Activated naive CD4-positive, alpha-beta T cell treated with anti-CD3 and anti-CD28 coated beads for 36 hours (primary cell): ENCODE measurements at regions of chr17 and their contacts with region 1.

Region 1: GRCh38 chr17:17752089-17752820 is 71.0 kb downstream of the RAI1 start:
- DNase-seq: peak; percentile 97
- H3K4me3 Mint-ChIP-seq: peak overlapping the region; percentile 92
- H3K27ac Mint-ChIP-seq: peak overlapping the region; percentile 98
- H3K4me1 Mint-ChIP-seq: peaks cover 71% of the 10 kb centered on the region
- H3K27me3 Mint-ChIP-seq: no peaks in the 10 kb centered on the region

Region 2: GRCh38 chr17:17694169-17695081 is 57.8 kb before region 1 on chr17:
- CTCF ChIA-PET with region 1: interaction called, 4 read pairs
- intact Hi-C with region 1: loop called (anchors 1 kb)
- DNase-seq: peak; percentile 80
- H3K4me3 Mint-ChIP-seq: peak overlapping the region; percentile 90
- H3K27ac Mint-ChIP-seq: peak overlapping the region; percentile 97
- H3K4me1 Mint-ChIP-seq: peaks cover 71% of the 10 kb centered on the region
- H3K27me3 Mint-ChIP-seq: no peaks in the 10 kb centered on the region

Region 3: GRCh38 chr17:17783116-17783824 is 31.0 kb after region 1 on chr17:
- CTCF ChIA-PET with region 1: no interaction called
- intact Hi-C with region 1: loop called (anchors 1 kb)
- DNase-seq: peak; percentile 71
- H3K4me3 Mint-ChIP-seq: peak overlapping the region; percentile 70
- H3K27ac Mint-ChIP-seq: no peak overlapping the region
- H3K4me1 Mint-ChIP-seq: peaks cover 21% of the 10 kb centered on the region
- H3K27me3 Mint-ChIP-seq: peaks cover 2% of the 10 kb centered on the region

Region 4: GRCh38 chr17:17823433-17824118 is 71.3 kb after region 1 on chr17:
- CTCF ChIA-PET with region 1: no interaction called
- intact Hi-C with region 1: loop called (anchors 1 kb)
- DNase-seq: peak; percentile 82
- H3K4me3 Mint-ChIP-seq: peak overlapping the region; percentile 75
- H3K27ac Mint-ChIP-seq: peak overlapping the region; percentile 91
- H3K4me1 Mint-ChIP-seq: peaks cover 94% of the 10 kb centered on the region
- H3K27me3 Mint-ChIP-seq: no peaks in the 10 kb centered on the region

Region 5: GRCh38 chr17:17849845-17850373 is 97.7 kb after region 1 on chr17:
- CTCF ChIA-PET with region 1: no interaction called
- intact Hi-C with region 1: loop called (anchors 1 kb)
- DNase-seq: peak; percentile 94
- H3K4me3 Mint-ChIP-seq: peak overlapping the region; percentile 41
- H3K27ac Mint-ChIP-seq: peak overlapping the region; percentile 95
- H3K4me1 Mint-ChIP-seq: peaks cover 78% of the 10 kb centered on the region
- H3K27me3 Mint-ChIP-seq: no peaks in the 10 kb centered on the region

Region 6: DNA sequence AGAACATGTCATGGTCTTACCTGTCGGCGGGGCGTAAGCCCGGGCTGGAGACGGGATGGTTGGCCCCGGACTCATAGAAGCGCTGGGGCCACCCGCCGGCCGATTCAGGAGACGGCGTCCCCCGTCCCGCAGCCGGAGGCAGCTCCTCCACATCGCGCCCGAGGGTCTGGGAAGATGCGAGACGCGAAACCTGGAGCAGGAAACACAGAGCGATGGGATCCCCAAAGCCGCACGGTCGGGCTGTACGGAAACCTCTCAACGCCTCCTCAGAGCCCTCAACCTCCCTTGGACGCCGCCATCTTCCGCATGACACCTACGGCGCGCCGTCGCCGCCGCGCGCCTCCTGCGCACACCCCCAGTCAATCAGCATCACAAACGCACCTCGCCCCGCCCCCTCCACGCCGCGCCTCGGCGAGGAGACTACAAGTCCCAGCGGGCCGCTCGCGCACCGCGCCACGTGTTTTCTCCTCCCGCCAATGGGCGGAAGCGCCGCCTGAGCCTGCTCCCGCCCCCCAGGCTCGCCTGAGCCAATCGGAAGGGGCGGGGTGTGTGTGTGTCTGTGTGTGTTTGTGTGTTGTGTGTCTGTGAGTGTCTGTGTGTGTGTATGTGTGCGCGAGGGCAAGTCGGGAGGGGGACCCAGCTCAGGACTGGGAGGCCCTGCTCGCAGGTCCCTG is 286.7 kb after region 1 on chr17 and contains the starts of genes ATPAF2 and GID4:
- CTCF ChIA-PET with region 1: no interaction called
- intact Hi-C with region 1: loop called (anchors 1 kb)
- DNase-seq: peak; percentile 100
- H3K4me3 Mint-ChIP-seq: peak within 1 kb of the TSS; percentile 86
- H3K27ac Mint-ChIP-seq: peak within 1 kb of the TSS; percentile 79
- H3K4me1 Mint-ChIP-seq: peaks cover 40% of the 10 kb centered on the region
- H3K27me3 Mint-ChIP-seq: no peaks in the 10 kb centered on the region
- total RNA-seq, gene ATPAF2: 24.7 to 25.7 TPM
- total RNA-seq, gene GID4: 5.2 to 6.0 TPM

Region 7: DNA sequence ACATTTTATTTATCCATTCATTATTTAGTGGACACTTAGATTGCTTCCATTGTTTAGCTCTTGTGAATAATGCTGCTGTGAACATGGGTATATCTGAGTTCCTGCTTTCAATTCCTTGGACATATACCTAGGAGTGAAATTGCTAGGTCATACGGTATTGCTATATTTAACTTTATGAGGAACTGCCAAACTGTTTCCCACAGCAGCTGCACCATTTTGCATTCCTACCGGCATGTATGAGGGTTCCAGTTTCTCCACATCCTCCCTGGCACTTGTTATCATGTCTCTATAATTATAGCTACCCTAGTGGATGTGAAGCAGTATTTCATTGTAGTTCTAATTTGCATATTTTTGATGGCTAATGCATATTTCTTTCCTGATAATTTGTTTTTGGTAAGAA is 311.8 kb after region 1 on chr17:
- CTCF ChIA-PET with region 1: no interaction called
- intact Hi-C with region 1: no loop called
- DNase-seq: no peak
- H3K4me3 Mint-ChIP-seq: no peak overlapping the region
- H3K27ac Mint-ChIP-seq: no peak overlapping the region
- H3K4me1 Mint-ChIP-seq: no peaks in the 10 kb centered on the region
- H3K27me3 Mint-ChIP-seq: no peaks in the 10 kb centered on the region